Transverse colon (tissue), 4 donors: ENCODE measurements at regions of chr5 and their contacts with region 1.

Region 1: DNA sequence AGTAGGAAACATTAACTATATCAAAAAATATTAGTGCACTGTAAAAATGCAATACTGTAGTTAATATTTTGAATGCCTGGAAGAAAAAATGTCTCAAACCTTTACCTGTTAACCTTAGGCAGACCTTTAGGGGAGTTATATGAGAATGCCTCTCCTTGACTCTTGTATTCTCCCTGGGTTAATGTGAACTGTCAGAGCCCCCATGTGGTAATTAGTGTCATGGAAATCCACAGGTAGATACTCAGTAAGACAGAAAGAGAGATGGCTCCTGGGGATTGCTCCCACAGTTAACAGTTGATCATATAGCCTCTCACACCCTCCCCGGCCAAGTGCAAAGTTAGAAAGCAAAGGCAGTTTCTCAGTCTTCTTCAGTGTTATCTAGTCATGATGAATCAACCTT is 742.8 kb downstream of the NR2F1-AS1 start:
- DNase-seq: no peak
- H3K4me3 ChIP-seq: no peak overlapping the region
- H3K27ac ChIP-seq: no peak overlapping the region
- H3K4me1 ChIP-seq: no peaks in the 10 kb centered on the region
- H3K27me3 ChIP-seq: no peaks in the 10 kb centered on the region
- CTCF ChIP-seq: no peak
- EP300 ChIP-seq: no peak
- POLR2A ChIP-seq: no peak

Region 2: GRCh38 chr5:92574023-92574422 is 264.2 kb before region 1 on chr5:
- in situ Hi-C with region 1: no loop called
- intact Hi-C with region 1: no loop called
- DNase-seq: no peak
- H3K4me3 ChIP-seq: no peak overlapping the region
- H3K27ac ChIP-seq: no peak overlapping the region
- H3K4me1 ChIP-seq: no peaks in the 10 kb centered on the region
- H3K27me3 ChIP-seq: no peaks in the 10 kb centered on the region
- CTCF ChIP-seq: no peak
- EP300 ChIP-seq: no peak
- POLR2A ChIP-seq: no peak

Region 3: DNA sequence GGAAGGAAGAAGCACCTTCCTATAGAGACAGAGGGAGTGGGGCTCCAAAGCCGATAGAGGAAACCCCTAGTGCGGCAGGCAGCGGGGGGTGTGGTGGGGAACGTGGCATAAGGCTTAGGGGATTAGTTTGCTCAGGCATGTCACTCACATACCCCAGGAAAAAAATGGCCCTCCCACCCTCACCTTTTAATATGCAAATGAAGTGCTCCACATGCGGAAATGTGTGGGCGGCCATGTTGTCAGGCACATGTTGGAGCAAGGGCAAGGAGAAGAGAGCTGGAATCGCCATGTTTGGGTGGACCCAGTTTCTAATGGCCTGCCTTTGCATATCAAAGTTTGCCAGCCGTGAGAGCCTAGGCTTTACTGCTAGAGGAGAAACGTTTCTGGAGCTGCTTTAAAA is 16.1 kb before region 1 on chr5:
- in situ Hi-C with region 1: no loop called
- intact Hi-C with region 1: loop called (anchors 2 kb)
- DNase-seq: no peak
- H3K4me3 ChIP-seq: no peak overlapping the region
- H3K27ac ChIP-seq: no peak overlapping the region
- H3K4me1 ChIP-seq: no peaks in the 10 kb centered on the region
- H3K27me3 ChIP-seq: no peaks in the 10 kb centered on the region
- CTCF ChIP-seq: no peak
- EP300 ChIP-seq: no peak
- POLR2A ChIP-seq: no peak